Lower lobe of right lung (tissue), 2 donors: ENCODE measurements at regions of chr3 and their contacts with region 1.

Region 1: DNA sequence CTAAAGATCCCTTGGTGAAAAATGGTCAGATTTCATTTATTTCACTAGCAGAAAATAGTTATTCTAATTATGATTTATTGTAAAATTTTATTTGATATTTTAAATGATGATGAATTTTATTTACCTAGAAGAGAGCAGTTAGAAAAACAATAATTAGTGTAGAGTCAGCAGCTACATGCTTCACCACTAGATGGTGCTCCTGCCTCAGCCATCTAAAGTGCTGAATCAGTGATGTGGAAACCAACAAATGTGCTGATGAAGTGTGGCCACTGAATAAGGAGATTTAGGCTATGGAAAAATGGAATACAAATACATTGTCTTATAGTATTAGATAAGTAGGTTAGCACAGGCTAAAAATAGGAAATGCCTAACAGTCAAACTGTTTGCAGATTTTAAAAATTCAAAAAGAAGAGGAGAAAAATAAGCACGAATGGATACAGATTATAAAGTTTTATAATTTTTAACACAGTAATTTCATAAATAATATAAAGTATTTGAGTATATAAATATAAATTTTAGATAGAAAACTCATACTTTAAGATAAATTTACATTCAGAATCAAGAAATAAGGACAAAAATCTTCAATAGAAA is 109.8 kb downstream of the PPP2R3A start:
- DNase-seq: no peak
- ATAC-seq: peak; percentile 91 to 93
- H3K4me3 ChIP-seq: no peak overlapping the region
- H3K27ac ChIP-seq: no peak overlapping the region
- H3K4me1 ChIP-seq: peaks cover 9% of the 10 kb centered on the region
- H3K27me3 ChIP-seq: no peaks in the 10 kb centered on the region
- CTCF ChIP-seq: peak; percentile 88

Region 2: DNA sequence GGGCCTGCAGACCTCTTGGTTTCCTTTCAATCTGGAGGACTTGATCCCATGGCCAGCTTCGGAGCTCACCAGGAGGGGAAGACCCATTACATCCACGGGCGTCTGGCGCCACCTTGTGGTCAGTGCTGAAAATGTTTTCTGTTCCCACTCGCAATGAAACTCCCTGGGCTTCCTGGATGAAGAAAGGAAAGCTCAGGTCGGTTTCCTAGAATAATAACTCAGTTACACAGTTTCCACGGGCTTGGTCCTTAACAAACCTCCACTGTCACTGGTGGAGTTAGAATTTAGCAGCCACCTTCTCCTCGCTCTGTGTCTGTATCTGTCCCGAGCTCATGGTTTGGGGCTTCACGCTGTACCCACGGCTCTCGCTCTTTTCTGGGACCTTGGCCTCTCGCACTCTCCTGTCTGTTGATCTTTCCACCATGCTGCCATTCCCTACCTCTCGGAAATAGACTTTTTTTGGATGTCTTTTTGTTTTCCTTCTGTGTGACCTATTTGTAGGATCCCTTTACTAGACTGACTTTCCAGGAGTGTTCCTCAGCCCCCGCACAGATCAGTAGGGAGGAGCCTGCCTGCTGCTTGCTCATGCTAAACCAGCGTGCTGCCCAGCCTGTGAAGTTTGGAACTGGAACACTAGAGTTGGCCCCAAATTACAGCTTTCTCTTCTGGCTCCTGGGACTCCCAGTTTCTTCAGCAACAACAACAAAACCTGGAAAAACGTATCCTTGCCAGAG is 938.8 kb after region 1 on chr3:
- intact Hi-C with region 1: loop called (anchors 10 kb)
- DNase-seq: peak; percentile 89
- ATAC-seq: peak; percentile 97 to 98
- H3K4me3 ChIP-seq: peak overlapping the region; percentile 52
- H3K27ac ChIP-seq: peak overlapping the region; percentile 61
- H3K4me1 ChIP-seq: peaks cover 5% of the 10 kb centered on the region
- H3K27me3 ChIP-seq: no peaks in the 10 kb centered on the region
- CTCF ChIP-seq: peak; percentile 91